ENCODE measurements at regions of chr4 and their contacts with region 1.

Region 1: DNA sequence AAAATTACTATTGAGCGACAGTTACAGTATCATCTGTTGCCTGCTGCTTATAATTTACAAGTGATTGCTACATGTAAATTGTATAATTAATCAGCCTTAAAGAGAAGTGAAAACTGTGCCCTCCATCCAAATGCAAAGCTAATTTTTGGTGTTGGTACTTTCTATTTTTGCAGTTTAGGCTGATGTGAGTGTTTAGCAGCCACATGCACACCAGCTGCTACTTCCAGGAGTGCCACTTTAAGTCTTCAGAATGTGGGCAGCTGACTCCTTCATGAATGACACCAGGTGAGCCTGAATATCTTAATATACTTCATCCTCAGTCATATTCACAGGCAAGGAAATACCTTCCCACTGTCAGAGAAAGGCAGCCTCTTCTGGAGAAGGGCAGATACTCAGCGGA is 149.8 kb upstream of the RASGEF1B start:
- DNase-seq: peak; percentile 73
- H3K4me3 ChIP-seq: peak overlapping the region; percentile 1
- H3K27ac ChIP-seq: peak overlapping the region; percentile 49
- H3K4me1 ChIP-seq: peaks cover 58% of the 10 kb centered on the region
- CTCF ChIP-seq: no peak

Region 2: GRCh38 chr4:81574991-81575390 is 46.5 kb before region 1 on chr4:
- CTCF ChIA-PET with region 1: no interaction called
- POLR2A ChIA-PET with region 1: interaction called, 13 read pairs
- intact Hi-C with region 1: no loop called
- DNase-seq: no peak
- H3K4me3 ChIP-seq: no peak overlapping the region
- H3K27ac ChIP-seq: no peak overlapping the region
- H3K4me1 ChIP-seq: peaks cover 8% of the 10 kb centered on the region
- CTCF ChIP-seq: no peak

Region 3: GRCh38 chr4:81600520-81601357 is 20.8 kb before region 1 on chr4:
- CTCF ChIA-PET with region 1: no interaction called
- POLR2A ChIA-PET with region 1: interaction called, 10 read pairs
- intact Hi-C with region 1: no loop called
- DNase-seq: no peak
- H3K4me3 ChIP-seq: no peak overlapping the region
- H3K27ac ChIP-seq: no peak overlapping the region
- H3K4me1 ChIP-seq: peaks cover 9% of the 10 kb centered on the region
- CTCF ChIP-seq: no peak

Region 4: GRCh38 chr4:82481506-82481840 is 860.0 kb after region 1 on chr4:
- CTCF ChIA-PET with region 1: no interaction called
- POLR2A ChIA-PET with region 1: no interaction called
- intact Hi-C with region 1: no loop called
- DNase-seq: no peak
- H3K4me3 ChIP-seq: no peak overlapping the region
- H3K27ac ChIP-seq: no peak overlapping the region
- H3K4me1 ChIP-seq: no peaks in the 10 kb centered on the region
- CTCF ChIP-seq: no peak

Region 5: GRCh38 chr4:82968972-82969371 is 1347.5 kb after region 1 on chr4:
- CTCF ChIA-PET with region 1: no interaction called
- POLR2A ChIA-PET with region 1: no interaction called
- intact Hi-C with region 1: no loop called
- DNase-seq: peak; percentile 70
- H3K4me3 ChIP-seq: peak overlapping the region; percentile 51
- H3K27ac ChIP-seq: peak overlapping the region; percentile 98
- H3K4me1 ChIP-seq: peaks cover 72% of the 10 kb centered on the region
- CTCF ChIP-seq: no peak